ENCODE measurements at regions of chr2 and their contacts with region 1.

Region 1: GRCh38 chr2:207473049-207473930 is 56.5 kb upstream of the CREB1 start:
- DNase-seq: no peak
- H3K4me3 ChIP-seq: no peak overlapping the region
- H3K27ac ChIP-seq: no peak overlapping the region
- H3K4me1 ChIP-seq: no peaks in the 10 kb centered on the region
- CTCF ChIP-seq: peak; percentile 31; the same call in 1 of the 2 replicates

Region 2: GRCh38 chr2:206800506-206801417 is 672.5 kb before region 1 on chr2:
- CTCF ChIA-PET with region 1: no interaction called
- POLR2A ChIA-PET with region 1: no interaction called
- intact Hi-C with region 1: loop called (anchors 2 kb)
- DNase-seq: peak; percentile 51
- H3K4me3 ChIP-seq: no peak overlapping the region
- H3K27ac ChIP-seq: no peak overlapping the region
- H3K4me1 ChIP-seq: no peaks in the 10 kb centered on the region
- CTCF ChIP-seq: peak; percentile 84

Region 3: DNA sequence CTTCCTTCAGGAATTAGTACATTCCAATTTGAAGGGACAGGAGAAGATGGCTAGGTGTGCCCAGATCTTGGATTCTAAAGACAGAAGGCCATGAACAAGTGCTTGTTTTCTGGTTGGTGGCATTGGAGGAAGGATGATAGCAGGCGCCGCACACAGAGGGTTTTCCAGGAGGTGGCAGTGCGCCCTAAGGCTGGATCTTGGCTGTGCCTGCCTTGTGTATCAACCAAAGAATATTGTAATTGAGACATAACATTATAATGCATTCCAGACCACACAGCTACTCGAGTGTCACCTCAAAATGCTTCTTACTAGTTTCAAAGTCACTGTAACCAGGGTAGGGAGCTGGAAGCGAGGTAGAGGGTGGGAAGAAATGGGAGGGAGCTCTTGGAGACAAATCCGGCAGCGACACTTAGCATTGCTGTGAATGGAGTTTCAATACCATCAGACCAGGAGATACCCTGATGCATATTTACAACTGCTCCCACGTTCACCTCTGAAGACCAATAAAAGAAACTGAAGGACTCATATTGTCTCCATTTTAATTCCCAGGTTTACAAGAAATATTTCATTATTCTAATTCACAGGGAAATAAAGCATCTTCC is 491.4 kb before region 1 on chr2:
- CTCF ChIA-PET with region 1: no interaction called
- POLR2A ChIA-PET with region 1: no interaction called
- intact Hi-C with region 1: loop called (anchors 10 kb)
- DNase-seq: no peak
- H3K4me3 ChIP-seq: no peak overlapping the region
- H3K27ac ChIP-seq: no peak overlapping the region
- H3K4me1 ChIP-seq: no peaks in the 10 kb centered on the region
- CTCF ChIP-seq: no peak

Region 4: DNA sequence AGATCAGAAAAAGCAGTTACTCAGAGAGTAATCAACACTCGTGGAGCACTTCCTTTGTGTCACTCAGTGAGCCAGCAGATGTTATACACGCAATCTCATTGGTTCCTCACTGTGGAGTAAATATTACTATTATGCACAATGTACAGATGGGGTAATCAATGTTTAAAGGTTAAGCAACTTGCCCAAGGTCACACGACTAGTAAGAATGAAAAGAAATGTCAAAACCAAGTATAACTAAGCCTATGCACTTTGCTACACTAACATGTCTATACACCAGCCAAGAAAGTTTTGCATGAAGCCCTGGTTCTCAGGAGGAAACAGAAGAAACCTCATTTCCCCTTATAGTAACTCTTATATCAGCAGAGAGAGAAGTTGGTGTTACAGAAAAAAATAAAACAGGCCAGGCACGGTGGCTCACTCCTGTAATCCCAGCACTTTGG is 146.5 kb after region 1 on chr2:
- CTCF ChIA-PET with region 1: no interaction called
- POLR2A ChIA-PET with region 1: no interaction called
- intact Hi-C with region 1: no loop called
- DNase-seq: peak; percentile 75
- H3K4me3 ChIP-seq: peak overlapping the region; percentile 43
- H3K27ac ChIP-seq: peak overlapping the region; percentile 66
- H3K4me1 ChIP-seq: peaks cover 54% of the 10 kb centered on the region
- CTCF ChIP-seq: no peak